Naive thymus-derived CD8-positive, alpha-beta T cell (primary cell): ENCODE measurements at regions of chr17 and their contacts with region 1.

Region 1: GRCh38 chr17:83051395-83052233 is 27.8 kb upstream of the METRNL start:
- DNase-seq: peak; percentile 97 to 99 (median 98)
- ATAC-seq: peak; percentile 84 to 86
- H3K4me3 Mint-ChIP-seq: peak overlapping the region; percentile 70 to 94 (median 88)
- H3K27ac Mint-ChIP-seq: peak overlapping the region; percentile 63 to 96 (median 93)
- H3K4me1 Mint-ChIP-seq: peaks cover 11 to 56% (median 36%) of the 10 kb centered on the region in 4 donors
- H3K27me3 Mint-ChIP-seq: no peaks in the 10 kb centered on the region

Region 2: DNA sequence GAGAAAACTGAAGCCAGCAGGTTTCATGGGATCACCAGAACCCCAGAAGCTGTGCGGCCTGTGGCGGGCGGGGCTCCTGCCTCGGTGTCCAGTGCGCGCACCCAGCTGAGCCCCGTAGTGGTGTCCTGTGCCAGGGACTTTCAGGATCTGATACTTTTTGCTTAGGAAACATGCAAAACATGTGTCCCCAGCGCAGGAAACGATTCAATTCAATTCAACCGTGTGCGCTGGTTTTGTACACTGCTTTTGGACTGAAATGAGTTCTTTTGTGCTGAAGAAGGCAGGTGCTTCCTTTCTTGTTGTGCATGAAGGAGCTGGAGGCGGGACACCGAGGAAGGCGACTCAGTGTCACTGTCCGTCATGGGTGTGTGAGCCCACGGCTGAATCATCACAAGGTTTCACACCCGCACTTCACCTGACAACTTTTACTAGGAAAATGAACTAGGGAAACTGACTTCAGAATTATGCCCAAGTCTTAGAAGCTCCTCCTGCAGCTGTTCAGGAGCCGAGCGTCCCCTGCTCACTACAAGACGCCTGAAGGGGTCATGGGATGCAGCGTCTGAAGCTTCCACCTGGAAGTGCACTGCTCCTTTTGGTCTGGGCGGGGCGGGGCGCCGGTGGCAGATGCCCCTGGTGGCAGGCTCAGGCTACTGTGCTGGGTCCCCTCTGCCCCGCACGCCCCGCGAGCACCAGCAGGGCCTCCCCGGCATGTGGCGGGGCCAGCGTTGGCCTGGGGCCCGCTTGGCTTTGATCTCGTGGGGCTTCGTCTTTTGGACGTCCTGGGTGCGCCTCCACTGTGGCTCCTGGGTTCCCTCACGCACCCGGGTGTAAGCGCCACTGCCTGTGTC is 180.3 kb before region 1 on chr17:
- POLR2A ChIA-PET with region 1: no interaction called
- DNase-seq: peak in 1 of 10 donors; percentile 66
- ATAC-seq: peak in 1 of 2 donors; percentile 72
- H3K4me3 Mint-ChIP-seq: peak overlapping the region in 1 of 10 donors; percentile 36
- H3K27ac Mint-ChIP-seq: peak overlapping the region in 3 of 10 donors; percentile 40 to 75 (median 41)
- H3K4me1 Mint-ChIP-seq: peaks cover 5 to 60% (median 9%) of the 10 kb centered on the region in 4 donors
- H3K27me3 Mint-ChIP-seq: no peaks in the 10 kb centered on the region

Region 3: DNA sequence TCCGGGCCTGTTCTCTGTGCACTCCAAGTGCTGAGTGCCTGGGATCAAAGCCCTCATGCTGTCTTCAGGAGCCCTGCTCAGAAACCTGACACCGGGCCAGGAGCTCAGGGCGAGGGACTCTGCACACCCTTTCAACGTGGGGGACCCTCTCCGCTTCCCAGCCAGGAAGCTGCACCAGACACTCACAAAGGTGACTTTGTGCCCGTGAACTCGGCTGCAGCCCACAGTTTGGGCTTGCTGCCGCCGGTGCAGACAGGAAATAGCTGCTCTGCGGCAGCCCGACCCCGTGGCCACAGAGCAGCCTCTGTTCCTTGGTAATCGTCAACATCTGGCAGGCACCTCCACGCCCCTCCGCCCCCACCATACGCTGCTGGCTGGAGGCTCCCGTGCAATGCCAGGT is 65.6 kb before region 1 on chr17:
- POLR2A ChIA-PET with region 1: interaction called, 12 read pairs
- DNase-seq: peak; percentile 53 to 81 (median 66)
- ATAC-seq: peak; percentile 93 to 96
- H3K4me3 Mint-ChIP-seq: peak overlapping the region; percentile 72 to 88 (median 82)
- H3K27ac Mint-ChIP-seq: peak overlapping the region; percentile 73 to 95 (median 88)
- H3K4me1 Mint-ChIP-seq: peaks cover 23 to 69% (median 50%) of the 10 kb centered on the region in 4 donors
- H3K27me3 Mint-ChIP-seq: peaks cover 0 to 4% (median 0%) of the 10 kb centered on the region in 5 donors

Region 4: DNA sequence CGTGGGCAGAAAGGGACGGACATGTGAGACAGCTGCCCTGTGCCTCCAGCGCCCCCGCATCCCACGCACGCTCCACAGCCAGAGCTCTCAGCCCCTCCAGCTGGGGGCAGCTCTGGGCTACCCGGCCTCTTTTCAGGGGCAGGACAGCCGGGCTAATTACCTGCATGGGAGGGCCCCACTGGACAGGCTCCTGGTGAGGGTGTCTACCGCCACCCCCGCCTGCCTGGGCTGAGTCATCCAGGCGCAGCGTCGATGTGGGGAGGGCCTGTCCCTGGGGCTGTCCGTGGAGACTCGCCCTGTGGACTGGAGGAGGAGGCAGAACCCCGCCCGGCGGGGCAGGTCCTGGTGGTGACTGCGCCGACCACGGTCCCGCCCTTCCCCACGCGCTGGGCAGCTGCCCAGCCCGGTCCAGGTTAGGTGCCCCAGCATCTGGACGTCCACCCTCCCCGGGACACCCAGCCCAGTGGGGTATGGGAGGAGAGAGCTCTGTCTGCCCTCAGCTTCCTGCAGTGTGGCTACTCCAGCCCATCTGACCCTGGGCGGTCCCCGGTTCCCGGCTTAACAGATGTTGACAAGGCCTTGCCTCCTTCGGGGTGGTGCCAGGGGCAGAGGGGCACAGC is 21.9 kb after region 1 on chr17:
- POLR2A ChIA-PET with region 1: interaction called, 10 read pairs
- DNase-seq: no peak
- ATAC-seq: no peak
- H3K4me3 Mint-ChIP-seq: no peak overlapping the region
- H3K27ac Mint-ChIP-seq: peak overlapping the region in 1 of 10 donors; percentile 49
- H3K4me1 Mint-ChIP-seq: peaks cover 23 to 37% (median 31%) of the 10 kb centered on the region in 4 donors
- H3K27me3 Mint-ChIP-seq: peaks cover 0 to 6% (median 0%) of the 10 kb centered on the region in 5 donors

Region 5: DNA sequence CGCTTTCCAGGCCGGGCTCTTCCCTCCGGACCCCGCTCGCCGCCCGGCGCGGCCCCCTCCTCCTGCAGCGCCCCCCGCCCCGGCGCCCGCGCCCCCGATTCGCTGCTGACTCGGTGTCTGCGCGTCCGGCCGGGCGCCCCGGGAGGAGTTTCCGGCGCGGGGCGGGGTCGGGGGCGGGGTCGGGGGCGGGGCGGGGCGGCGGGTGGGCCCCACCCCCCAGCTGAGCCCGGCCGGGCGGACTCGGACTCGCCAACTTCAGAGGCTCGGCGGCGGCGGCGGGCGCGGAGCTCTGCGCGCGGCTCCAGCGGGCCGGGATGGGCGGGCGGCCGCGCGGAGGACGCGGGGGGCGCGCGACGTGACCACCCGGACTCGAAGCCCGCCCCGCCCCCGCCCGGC is 27.7 kb after region 1 on chr17 and contains the start of gene METRNL:
- POLR2A ChIA-PET with region 1: interaction called, 10 read pairs
- DNase-seq: peak in 8 of 10 donors; percentile 20 to 70 (median 47)
- ATAC-seq: peak; percentile 34 to 38
- H3K4me3 Mint-ChIP-seq: peak within 1 kb of the TSS in 9 of 10 donors; percentile 29 to 75 (median 60)
- H3K27ac Mint-ChIP-seq: peak within 1 kb of the TSS in 1 of 10 donors; percentile 49
- H3K4me1 Mint-ChIP-seq: peaks cover 6 to 34% (median 24%) of the 10 kb centered on the region in 4 donors
- H3K27me3 Mint-ChIP-seq: peaks cover 0 to 11% (median 0%) of the 10 kb centered on the region in 5 donors
- polyA plus RNA-seq, gene METRNL: 0.42 to 4.8 (median 1.3) TPM